ENCODE measurements at regions of chr16 and their contacts with region 1.

Region 1: DNA sequence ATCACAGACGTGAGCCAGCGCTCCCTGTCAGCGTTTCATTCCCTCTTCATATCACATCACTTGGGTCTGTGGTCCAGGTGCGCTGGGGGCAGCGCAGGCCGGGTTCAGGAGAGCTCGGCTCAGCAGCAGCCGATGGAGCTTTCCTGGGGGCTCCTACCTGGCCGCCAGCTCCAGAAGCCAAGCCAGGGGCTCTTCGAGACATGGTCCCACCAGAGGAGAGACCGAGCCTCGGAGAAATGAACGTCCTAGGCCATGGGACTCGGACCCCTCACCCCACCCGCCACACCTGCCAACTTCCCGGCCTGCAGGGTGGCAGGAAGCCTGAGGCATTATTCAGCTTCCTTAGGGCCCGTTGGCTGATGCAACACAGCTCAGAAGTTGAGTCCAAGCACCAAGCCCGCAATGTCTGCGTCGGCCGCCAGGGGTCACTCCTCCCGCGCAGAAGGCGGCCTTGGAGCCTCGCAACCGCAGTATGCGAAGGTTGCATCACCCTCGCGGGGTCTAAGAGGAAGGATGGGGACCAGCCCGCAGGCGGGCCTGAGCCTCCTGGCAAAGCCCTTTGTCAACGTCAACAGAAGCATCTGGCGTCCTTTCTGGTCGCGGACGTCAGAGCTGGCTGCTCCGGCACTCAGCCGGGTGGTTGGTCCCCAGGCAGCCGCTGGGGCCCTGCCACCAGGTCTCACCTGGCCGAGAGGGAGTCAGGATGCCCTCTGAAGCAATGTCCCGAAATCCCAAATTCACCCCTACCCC is 13.2 kb upstream of the KLHDC4 start:
- DNase-seq: peak; percentile 94 to 96
- H3K4me3 ChIP-seq: no peak overlapping the region
- H3K27ac ChIP-seq: peak overlapping the region; percentile 34 to 80 (median 63)
- H3K4me1 ChIP-seq: peaks cover 17 to 42% (median 26%) of the 10 kb centered on the region in 4 donors
- H3K27me3 ChIP-seq: peaks cover 0 to 4% (median 0%) of the 10 kb centered on the region in 3 donors
- CTCF ChIP-seq: peak in 6 of 7 experiments; percentile 72 to 99 (median 98)
- EP300 ChIP-seq: peak; percentile 65
- POLR2A ChIP-seq: no peak

Region 2: DNA sequence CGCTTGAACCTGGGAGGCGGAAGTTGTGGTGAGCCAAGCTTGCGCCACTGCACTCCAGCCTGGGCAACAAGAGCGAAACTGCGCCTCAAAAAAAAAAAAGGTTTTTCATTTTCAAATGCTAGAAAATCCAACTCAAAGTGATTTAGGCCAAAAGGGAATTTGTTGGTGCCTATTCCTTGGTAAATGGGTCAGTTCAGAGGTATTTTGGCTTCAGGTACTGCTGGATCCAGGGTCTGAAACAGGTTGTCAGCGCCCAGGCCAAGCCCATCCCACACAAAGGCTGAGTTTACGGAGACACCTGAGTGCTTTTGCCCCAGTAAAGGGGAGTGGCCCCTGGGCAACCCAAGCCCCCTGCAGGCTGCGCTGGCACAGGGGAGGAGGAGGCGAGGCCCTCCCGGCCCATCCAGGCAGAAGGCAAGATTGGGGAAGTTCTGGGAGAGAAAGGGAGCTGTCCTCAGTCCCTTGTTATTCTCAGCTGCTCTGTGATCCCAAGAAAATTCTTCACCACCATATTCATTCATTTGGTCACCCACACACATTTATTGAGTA is 185.2 kb before region 1 on chr16:
- intact Hi-C with region 1: loop called (anchors 5 kb)
- DNase-seq: no peak
- H3K4me3 ChIP-seq: no peak overlapping the region
- H3K27ac ChIP-seq: no peak overlapping the region
- H3K4me1 ChIP-seq: peaks cover 0 to 5% (median 3%) of the 10 kb centered on the region in 4 donors
- H3K27me3 ChIP-seq: peaks cover 0 to 87% (median 14%) of the 10 kb centered on the region in 3 donors
- CTCF ChIP-seq: no peak
- EP300 ChIP-seq: no peak
- POLR2A ChIP-seq: no peak

Region 3: DNA sequence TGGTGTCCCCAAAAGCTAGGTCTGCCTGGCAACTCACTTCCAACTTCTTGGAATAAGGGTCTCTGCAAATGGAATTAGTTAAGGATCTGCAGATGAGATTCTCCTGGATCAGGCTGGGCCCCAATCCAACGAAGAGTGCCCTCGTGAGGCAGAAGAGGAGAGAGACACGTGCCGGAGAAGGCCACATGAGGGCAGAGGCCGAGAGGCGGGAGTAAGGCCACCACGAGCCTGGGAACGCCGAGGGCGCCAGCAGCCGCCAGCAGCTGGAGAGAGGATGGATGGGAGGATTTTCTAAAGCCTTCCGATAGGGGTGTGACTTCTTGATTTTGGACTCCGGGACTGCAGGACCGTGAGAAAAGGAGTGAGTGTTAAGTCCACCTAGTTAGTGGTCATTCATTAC is 100.4 kb before region 1 on chr16:
- intact Hi-C with region 1: no loop called
- DNase-seq: no peak
- H3K4me3 ChIP-seq: no peak overlapping the region
- H3K27ac ChIP-seq: no peak overlapping the region
- H3K4me1 ChIP-seq: no peaks in the 10 kb centered on the region
- H3K27me3 ChIP-seq: peaks cover 0 to 30% (median 2%) of the 10 kb centered on the region in 3 donors
- CTCF ChIP-seq: no peak
- EP300 ChIP-seq: no peak
- POLR2A ChIP-seq: no peak

Region 4: DNA sequence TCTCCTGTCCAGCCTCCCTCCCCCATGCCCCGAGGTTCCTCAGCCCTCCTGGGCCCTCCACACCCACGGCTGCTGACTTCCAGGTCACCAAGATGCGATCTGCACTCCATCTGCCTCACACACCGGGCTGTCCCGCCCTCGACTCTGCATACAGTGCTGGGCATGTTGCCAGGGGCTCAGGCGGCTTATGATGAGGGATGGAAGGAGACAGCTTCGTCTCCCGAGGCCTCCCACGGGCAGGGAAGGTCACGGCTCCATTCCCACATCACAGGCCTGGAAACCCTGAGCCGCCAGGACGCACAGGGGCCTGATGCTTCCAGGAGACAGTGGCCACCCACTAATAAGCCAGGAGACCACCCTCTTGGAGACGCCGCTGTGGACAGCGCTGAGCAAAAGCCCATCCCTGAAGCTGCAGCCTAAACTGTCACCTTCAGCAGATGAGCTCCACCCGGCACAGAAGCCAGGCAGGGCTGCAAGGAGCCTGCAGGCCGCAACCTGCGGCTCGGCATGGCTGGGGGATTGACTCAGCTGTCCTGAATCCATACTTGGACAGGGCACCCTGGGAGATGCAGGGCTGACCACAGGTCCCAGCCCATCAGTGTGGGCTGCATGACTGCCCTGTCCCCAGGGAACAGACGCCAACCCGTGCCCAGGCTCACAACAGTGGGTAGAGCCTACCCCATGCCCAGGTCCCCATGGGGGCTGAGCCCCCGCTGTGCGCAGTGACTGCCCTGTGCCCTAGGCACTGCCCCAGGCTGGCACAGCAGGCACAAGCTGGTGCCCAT is 55.8 kb after region 1 on chr16:
- intact Hi-C with region 1: no loop called
- DNase-seq: peak in 1 of 2 donors; percentile 79
- H3K4me3 ChIP-seq: no peak overlapping the region
- H3K27ac ChIP-seq: peak overlapping the region in 4 of 5 donors; percentile 16 to 86 (median 58)
- H3K4me1 ChIP-seq: peaks cover 9 to 38% (median 28%) of the 10 kb centered on the region in 4 donors
- H3K27me3 ChIP-seq: no peaks in the 10 kb centered on the region
- CTCF ChIP-seq: no peak
- EP300 ChIP-seq: no peak
- POLR2A ChIP-seq: no peak

Region 5: GRCh38 chr16:87874639-87875465 is 95.8 kb after region 1 on chr16:
- intact Hi-C with region 1: loop called (anchors 5 kb)
- DNase-seq: peak in 1 of 2 donors; percentile 29
- H3K4me3 ChIP-seq: no peak overlapping the region
- H3K27ac ChIP-seq: no peak overlapping the region
- H3K4me1 ChIP-seq: peaks cover 4 to 25% (median 9%) of the 10 kb centered on the region in 4 donors
- H3K27me3 ChIP-seq: peaks cover 0 to 48% (median 0%) of the 10 kb centered on the region in 3 donors
- CTCF ChIP-seq: no peak
- EP300 ChIP-seq: no peak
- POLR2A ChIP-seq: no peak